Ascending aorta (tissue), 2 donors: ENCODE measurements at regions of chr3 and their contacts with region 1.

Region 1: DNA sequence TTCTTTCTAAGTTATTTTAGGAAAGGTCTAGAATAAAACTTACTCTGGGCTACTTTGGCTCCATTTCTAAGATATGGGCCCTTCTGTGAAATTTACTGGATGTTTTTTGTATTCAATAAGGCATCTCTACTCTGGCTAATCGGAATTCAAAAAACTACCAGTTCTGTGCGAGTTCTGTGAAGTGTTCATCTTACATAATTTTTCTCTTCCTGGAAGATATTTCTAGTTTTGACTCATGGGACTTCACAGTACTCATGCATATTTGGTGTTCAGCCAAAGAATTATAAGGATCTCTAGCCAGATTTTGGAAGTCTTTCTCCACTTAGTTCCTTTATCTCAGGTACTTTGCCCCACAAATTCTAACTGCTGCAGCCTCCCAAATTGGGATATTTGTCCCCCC is 46.4 kb upstream of the MBNL1 start:
- DNase-seq: no peak
- H3K4me3 ChIP-seq: peak overlapping the region in 1 of 2 donors; percentile 29
- H3K27ac ChIP-seq: peak overlapping the region; percentile 74 to 75
- H3K4me1 ChIP-seq: peaks cover 5 to 54% of the 10 kb centered on the region in 2 donors
- H3K27me3 ChIP-seq: no peaks in the 10 kb centered on the region
- CTCF ChIP-seq: no peak

Region 2: DNA sequence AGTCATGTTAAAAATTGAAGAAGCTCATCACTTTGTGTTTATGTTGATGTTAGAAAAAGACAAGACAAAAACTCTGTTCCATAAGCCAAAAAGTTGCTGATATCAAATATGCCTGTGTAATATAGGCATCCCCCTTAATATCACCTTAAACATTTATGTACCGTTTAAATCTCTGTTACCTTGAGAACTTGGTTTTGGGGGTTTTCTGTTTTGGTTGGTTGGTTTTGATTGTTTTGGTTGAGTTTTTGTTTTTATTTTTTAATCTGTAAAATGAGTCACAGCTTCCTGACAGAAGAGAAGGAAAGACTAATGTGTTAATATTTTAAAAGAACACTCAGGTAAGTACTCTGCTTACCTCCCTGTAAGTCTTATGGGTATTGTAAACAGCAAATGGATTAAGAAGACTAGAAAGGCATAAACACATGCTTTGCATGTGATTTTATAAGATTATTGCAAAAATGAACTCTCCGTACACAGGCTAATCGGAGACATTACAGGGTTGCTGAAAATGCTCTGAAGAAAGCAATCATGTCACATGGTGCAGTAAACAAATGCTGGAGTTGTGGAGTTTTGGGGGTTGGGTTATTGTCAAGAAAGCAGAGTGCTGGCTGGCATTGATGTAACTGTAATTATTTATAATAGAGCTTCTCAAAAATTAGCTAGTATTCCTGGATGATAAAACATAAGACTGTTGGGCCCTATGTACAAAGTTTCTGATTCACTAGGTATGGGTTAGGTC is 23.1 kb before region 1 on chr3:
- intact Hi-C with region 1: loop called (anchors 1 kb)
- DNase-seq: no peak
- H3K4me3 ChIP-seq: peak overlapping the region in 1 of 2 donors; percentile 58
- H3K27ac ChIP-seq: peak overlapping the region; percentile 89 to 90
- H3K4me1 ChIP-seq: peaks cover 8 to 42% of the 10 kb centered on the region in 2 donors
- H3K27me3 ChIP-seq: no peaks in the 10 kb centered on the region
- CTCF ChIP-seq: no peak

Region 3: DNA sequence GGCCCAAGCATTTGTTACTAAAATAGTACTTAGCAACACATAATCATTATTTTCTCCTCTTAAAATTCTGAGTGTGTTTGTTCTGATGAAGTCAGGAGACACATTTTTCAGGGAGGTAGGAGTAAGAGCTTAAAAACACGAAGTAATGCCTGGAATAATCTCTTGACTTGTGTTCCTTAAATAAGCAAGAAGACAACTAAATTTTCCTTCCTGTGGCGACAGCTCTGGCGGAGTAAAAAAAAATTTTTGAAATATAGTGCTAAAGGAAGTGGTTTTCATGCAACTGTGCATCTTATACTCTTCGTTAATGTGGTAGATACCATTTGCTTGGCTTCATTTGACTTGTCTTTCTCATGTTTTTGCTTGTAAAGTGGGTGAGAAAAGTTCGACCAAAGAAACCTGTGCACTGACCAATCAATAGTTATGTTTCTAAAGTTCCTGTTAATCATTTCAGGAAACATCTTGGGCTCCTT is 35.3 kb after region 1 on chr3:
- intact Hi-C with region 1: loop called (anchors 2 kb)
- DNase-seq: no peak
- H3K4me3 ChIP-seq: no peak overlapping the region
- H3K27ac ChIP-seq: peak overlapping the region; percentile 66 to 82
- H3K4me1 ChIP-seq: peaks cover 3 to 28% of the 10 kb centered on the region in 2 donors
- H3K27me3 ChIP-seq: no peaks in the 10 kb centered on the region
- CTCF ChIP-seq: no peak

Region 4: DNA sequence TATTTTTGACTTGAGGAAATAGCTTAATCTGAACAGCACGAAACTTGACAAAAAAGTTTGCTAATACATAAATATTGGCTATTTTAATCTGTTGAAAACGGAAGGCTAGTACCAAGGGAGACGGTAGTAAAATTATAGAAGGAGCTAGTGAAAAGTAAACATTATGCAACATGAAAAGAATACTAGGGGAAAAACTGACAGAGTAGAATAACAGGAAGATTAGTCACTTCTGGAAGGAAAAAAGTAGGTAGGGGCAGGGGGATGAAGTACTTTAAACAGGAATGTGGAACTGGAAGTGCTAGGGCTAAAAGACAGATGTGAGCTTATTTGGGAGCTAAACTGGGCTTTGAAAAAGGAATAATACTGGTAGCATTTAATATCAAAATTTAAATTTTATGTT is 106.5 kb after region 1 on chr3:
- intact Hi-C with region 1: no loop called
- DNase-seq: no peak
- H3K4me3 ChIP-seq: no peak overlapping the region
- H3K27ac ChIP-seq: peak overlapping the region; percentile 79 to 91
- H3K4me1 ChIP-seq: peaks cover 7 to 62% of the 10 kb centered on the region in 2 donors
- H3K27me3 ChIP-seq: no peaks in the 10 kb centered on the region
- CTCF ChIP-seq: no peak